CD4-positive, alpha-beta memory T cell (primary cell): ENCODE measurements at regions of chr2 and their contacts with region 1.

Region 1: DNA sequence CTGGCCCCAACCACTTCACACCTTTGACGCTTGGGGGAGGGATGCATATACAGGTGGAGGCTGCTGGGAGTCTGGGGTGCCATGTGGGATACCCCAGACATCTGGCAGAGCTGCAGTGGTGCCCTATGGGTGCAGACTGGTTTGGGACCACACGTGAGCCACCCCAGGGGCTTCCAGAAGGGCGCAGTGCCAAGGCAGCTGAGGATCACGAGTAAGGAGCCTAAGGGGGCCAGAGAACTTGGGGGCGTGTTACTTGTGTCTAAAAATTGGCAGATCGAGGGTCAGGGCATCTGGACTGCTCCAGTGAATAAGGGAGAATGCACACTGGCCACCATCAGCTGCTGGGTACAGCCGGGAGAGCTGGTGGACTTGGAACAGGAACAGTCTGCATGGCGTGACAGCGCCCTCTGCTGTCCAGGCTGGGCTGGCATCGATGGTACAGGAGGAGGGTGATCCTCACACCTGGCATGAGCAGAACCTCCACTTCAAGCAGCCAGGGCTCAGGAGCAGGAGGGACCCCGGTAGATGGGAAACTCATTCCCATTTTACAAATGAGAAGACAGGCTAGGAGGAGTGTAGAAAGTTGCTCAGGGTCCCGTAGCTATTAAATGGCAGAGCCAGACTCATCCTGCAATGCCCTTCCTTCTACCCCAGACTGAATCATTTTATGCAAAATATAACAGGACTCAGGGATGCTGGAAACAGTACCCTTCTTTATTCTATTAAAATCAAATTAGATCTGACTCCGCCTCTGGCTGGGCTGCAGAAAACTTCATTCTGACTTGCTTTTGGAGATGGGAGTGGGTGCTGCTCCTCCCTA is 60.4 kb downstream of the ATOH8 start:
- DNase-seq: peak; percentile 64 to 75 (median 69)
- H3K4me3 ChIP-seq: no peak overlapping the region
- H3K4me3 Mint-ChIP-seq: no peak overlapping the region
- H3K27ac ChIP-seq: no peak overlapping the region
- H3K27ac Mint-ChIP-seq: peak overlapping the region in 2 of 7 donors; percentile 4 to 67
- H3K4me1 ChIP-seq: no peaks in the 10 kb centered on the region
- H3K4me1 Mint-ChIP-seq: peaks cover 0 to 2% (median 0%) of the 10 kb centered on the region in 4 donors
- H3K27me3 ChIP-seq: no peaks in the 10 kb centered on the region
- H3K27me3 Mint-ChIP-seq: peaks cover 6 to 10% of the 10 kb centered on the region in 2 donors

Region 2: GRCh38 chr2:85678794-85679672 is 135.2 kb before region 1 on chr2:
- CTCF ChIA-PET with region 1: interaction called, 3 read pairs
- POLR2A ChIA-PET with region 1: no interaction called
- intact Hi-C with region 1: loop called (anchors 1 kb)
- DNase-seq: peak; percentile 64 to 75 (median 68)
- H3K4me3 ChIP-seq: no peak overlapping the region
- H3K4me3 Mint-ChIP-seq: peak overlapping the region in 5 of 8 donors; percentile 20 to 52 (median 33)
- H3K27ac ChIP-seq: no peak overlapping the region
- H3K27ac Mint-ChIP-seq: no peak overlapping the region
- H3K4me1 ChIP-seq: peaks cover 4% of the 10 kb centered on the region
- H3K4me1 Mint-ChIP-seq: peaks cover 0 to 5% (median under 1%) of the 10 kb centered on the region in 4 donors
- H3K27me3 ChIP-seq: no peaks in the 10 kb centered on the region
- H3K27me3 Mint-ChIP-seq: peaks cover 0 to 2% of the 10 kb centered on the region in 2 donors

Region 3: GRCh38 chr2:85723707-85724360 is 90.4 kb before region 1 on chr2:
- CTCF ChIA-PET with region 1: interaction called, 25 read pairs
- POLR2A ChIA-PET with region 1: no interaction called
- intact Hi-C with region 1: loop called (anchors 1 kb)
- DNase-seq: no peak
- H3K4me3 ChIP-seq: no peak overlapping the region
- H3K4me3 Mint-ChIP-seq: no peak overlapping the region
- H3K27ac ChIP-seq: no peak overlapping the region
- H3K27ac Mint-ChIP-seq: no peak overlapping the region
- H3K4me1 ChIP-seq: peaks cover 1% of the 10 kb centered on the region
- H3K4me1 Mint-ChIP-seq: peaks cover 0 to 2% (median 0%) of the 10 kb centered on the region in 4 donors
- H3K27me3 ChIP-seq: peaks cover 4% of the 10 kb centered on the region
- H3K27me3 Mint-ChIP-seq: peaks cover 0 to 9% of the 10 kb centered on the region in 2 donors

Region 4: GRCh38 chr2:85728883-85729824 is 85.0 kb before region 1 on chr2:
- CTCF ChIA-PET with region 1: interaction called, 25 read pairs
- POLR2A ChIA-PET with region 1: no interaction called
- intact Hi-C with region 1: loop called (anchors 1 kb)
- DNase-seq: peak in 4 of 5 donors; percentile 51 to 61 (median 54)
- H3K4me3 ChIP-seq: no peak overlapping the region
- H3K4me3 Mint-ChIP-seq: no peak overlapping the region
- H3K27ac ChIP-seq: no peak overlapping the region
- H3K27ac Mint-ChIP-seq: peak overlapping the region in 1 of 7 donors; percentile 48
- H3K4me1 ChIP-seq: peaks cover 5% of the 10 kb centered on the region
- H3K4me1 Mint-ChIP-seq: peaks cover 0 to 5% (median 2%) of the 10 kb centered on the region in 4 donors
- H3K27me3 ChIP-seq: peaks cover 10% of the 10 kb centered on the region
- H3K27me3 Mint-ChIP-seq: peaks cover 5 to 9% of the 10 kb centered on the region in 2 donors

Region 5: GRCh38 chr2:85750587-85751575 is 63.3 kb before region 1 on chr2:
- CTCF ChIA-PET with region 1: interaction called, 61 read pairs
- POLR2A ChIA-PET with region 1: no interaction called
- intact Hi-C with region 1: loop called (anchors 1 kb)
- DNase-seq: peak in 4 of 5 donors; percentile 31 to 46 (median 44)
- H3K4me3 ChIP-seq: no peak overlapping the region
- H3K4me3 Mint-ChIP-seq: peak overlapping the region in 4 of 8 donors; percentile 9 to 71 (median 24)
- H3K27ac ChIP-seq: no peak overlapping the region
- H3K27ac Mint-ChIP-seq: no peak overlapping the region
- H3K4me1 ChIP-seq: peaks cover 17% of the 10 kb centered on the region
- H3K4me1 Mint-ChIP-seq: peaks cover 5 to 30% (median 12%) of the 10 kb centered on the region in 4 donors
- H3K27me3 ChIP-seq: peaks cover 23% of the 10 kb centered on the region
- H3K27me3 Mint-ChIP-seq: peaks cover 32 to 60% of the 10 kb centered on the region in 2 donors